ENCODE measurements at regions of chr1 and their contacts with region 1.

Region 1: GRCh38 chr1:94456736-94457135 is 38.5 kb downstream of the ABCD3 start:
- DNase-seq: no peak
- ATAC-seq: no peak
- H3K4me3 ChIP-seq: no peak overlapping the region
- H3K4me3 Mint-ChIP-seq: no peak overlapping the region
- H3K27ac ChIP-seq: no peak overlapping the region
- H3K27ac Mint-ChIP-seq: no peak overlapping the region
- H3K4me1 ChIP-seq: no peaks in the 10 kb centered on the region
- H3K4me1 Mint-ChIP-seq: peaks cover 2 to 19% (median 7%) of the 10 kb centered on the region in 3 donors
- H3K27me3 ChIP-seq: no peaks in the 10 kb centered on the region
- H3K27me3 Mint-ChIP-seq: no peaks in the 10 kb centered on the region

Region 2: GRCh38 chr1:94316836-94317789 is 139.6 kb before region 1 on chr1:
- CTCF ChIA-PET with region 1: interaction called in 1 of 2 experiments, 10 read pairs
- POLR2A ChIA-PET with region 1: no interaction called
- DNase-seq: no peak
- ATAC-seq: no peak
- H3K4me3 ChIP-seq: no peak overlapping the region
- H3K4me3 Mint-ChIP-seq: no peak overlapping the region
- H3K27ac ChIP-seq: no peak overlapping the region
- H3K27ac Mint-ChIP-seq: no peak overlapping the region
- H3K4me1 ChIP-seq: no peaks in the 10 kb centered on the region
- H3K4me1 Mint-ChIP-seq: no peaks in the 10 kb centered on the region
- H3K27me3 ChIP-seq: peaks cover 0 to 4% of the 10 kb centered on the region in 2 experiments
- H3K27me3 Mint-ChIP-seq: peaks cover 11 to 12% of the 10 kb centered on the region in 2 donors

Region 3: GRCh38 chr1:94336991-94337390 is 119.7 kb before region 1 on chr1:
- CTCF ChIA-PET with region 1: interaction called in 1 of 2 experiments, 10 read pairs
- POLR2A ChIA-PET with region 1: interaction called in 1 of 2 experiments, 6 read pairs
- DNase-seq: no peak
- ATAC-seq: no peak
- H3K4me3 ChIP-seq: no peak overlapping the region
- H3K4me3 Mint-ChIP-seq: no peak overlapping the region
- H3K27ac ChIP-seq: no peak overlapping the region
- H3K27ac Mint-ChIP-seq: no peak overlapping the region
- H3K4me1 ChIP-seq: no peaks in the 10 kb centered on the region
- H3K4me1 Mint-ChIP-seq: peaks cover 0 to 2% (median 2%) of the 10 kb centered on the region in 3 donors
- H3K27me3 ChIP-seq: peaks cover 0 to 11% of the 10 kb centered on the region in 2 experiments
- H3K27me3 Mint-ChIP-seq: peaks cover 3 to 20% of the 10 kb centered on the region in 2 donors